Dorsolateral prefrontal cortex (tissue), 120 donors: ENCODE measurements at regions of chr10 and their contacts with region 1.

Region 1: GRCh38 chr10:71981015-71981875 is 17.1 kb downstream of the CHST3 start:
- DNase-seq: peak in 9 of 10 donors; percentile 75 to 94 (median 92)
- H3K4me3 ChIP-seq: peak overlapping the region in 23 of 59 donors; percentile 0 to 40 (median 14)
- H3K27ac ChIP-seq: peak overlapping the region; percentile 83 to 100 (median 96)
- H3K27me3 ChIP-seq: no peaks in the 10 kb centered on the region
- CTCF ChIP-seq: peak in 5 of 56 donors; percentile 3 to 28 (median 11)

Region 2: DNA sequence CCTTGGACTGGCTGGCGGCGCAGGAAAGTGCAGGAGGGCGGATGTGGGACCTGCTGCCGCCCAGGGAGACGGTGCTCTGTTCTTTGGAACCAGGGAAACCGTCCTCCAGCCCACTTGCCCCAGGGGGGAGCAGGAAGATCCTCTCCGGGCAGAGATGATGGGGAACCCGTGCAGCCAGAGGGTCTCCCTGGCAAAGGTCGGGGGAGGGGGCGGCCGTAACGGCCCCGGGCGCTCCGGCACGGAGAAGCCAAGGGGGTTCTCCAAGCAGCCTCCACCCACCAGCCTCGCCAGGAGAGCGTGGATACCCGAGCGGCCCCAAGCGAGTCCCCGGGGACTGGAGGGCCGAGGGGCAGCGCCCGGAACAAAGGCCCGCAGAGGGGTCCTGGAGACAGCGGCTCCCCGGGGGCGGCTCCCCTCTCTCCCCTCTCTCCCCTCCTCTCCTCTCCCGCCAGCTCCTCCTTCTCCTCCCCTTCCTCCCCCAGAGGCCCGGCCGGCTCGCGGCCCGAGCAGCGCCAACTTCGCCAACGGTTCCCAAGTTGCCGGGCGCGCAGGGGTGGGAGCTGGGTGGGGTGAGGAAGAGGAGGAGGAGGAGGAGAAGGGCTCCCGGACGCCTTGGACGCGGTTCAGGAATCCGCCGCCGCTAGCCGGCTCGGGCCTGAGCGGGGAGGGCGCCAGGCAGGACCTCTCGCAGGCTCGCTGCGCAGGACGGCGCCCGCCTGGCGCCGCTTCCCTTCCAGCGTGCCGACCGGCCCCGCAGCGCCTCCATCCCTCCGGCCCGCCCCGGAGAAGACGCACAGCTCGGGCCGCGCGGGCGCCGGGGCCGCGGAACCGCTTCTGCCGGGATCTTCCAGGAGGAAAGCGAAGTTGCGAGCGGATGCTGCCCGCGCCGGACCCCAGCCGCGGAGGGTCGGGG is 17.2 kb before region 1 on chr10 and contains the start of gene CHST3:
- intact Hi-C with region 1: loop called in 1 of 2 experiments (anchors 1 kb)
- DNase-seq: peak in 5 of 10 donors; percentile 36 to 77 (median 73)
- H3K4me3 ChIP-seq: peak within 1 kb of the TSS; percentile 49 to 92 (median 78)
- H3K27ac ChIP-seq: peak within 1 kb of the TSS; percentile 72 to 100 (median 97)
- H3K27me3 ChIP-seq: peaks cover 0 to 12% (median 0%) of the 10 kb centered on the region in 45 donors
- CTCF ChIP-seq: peak in 10 of 56 donors; percentile 4 to 29 (median 14)
- total RNA-seq, gene CHST3: 7.0 to 62.9 (median 19.6) TPM

Region 3: DNA sequence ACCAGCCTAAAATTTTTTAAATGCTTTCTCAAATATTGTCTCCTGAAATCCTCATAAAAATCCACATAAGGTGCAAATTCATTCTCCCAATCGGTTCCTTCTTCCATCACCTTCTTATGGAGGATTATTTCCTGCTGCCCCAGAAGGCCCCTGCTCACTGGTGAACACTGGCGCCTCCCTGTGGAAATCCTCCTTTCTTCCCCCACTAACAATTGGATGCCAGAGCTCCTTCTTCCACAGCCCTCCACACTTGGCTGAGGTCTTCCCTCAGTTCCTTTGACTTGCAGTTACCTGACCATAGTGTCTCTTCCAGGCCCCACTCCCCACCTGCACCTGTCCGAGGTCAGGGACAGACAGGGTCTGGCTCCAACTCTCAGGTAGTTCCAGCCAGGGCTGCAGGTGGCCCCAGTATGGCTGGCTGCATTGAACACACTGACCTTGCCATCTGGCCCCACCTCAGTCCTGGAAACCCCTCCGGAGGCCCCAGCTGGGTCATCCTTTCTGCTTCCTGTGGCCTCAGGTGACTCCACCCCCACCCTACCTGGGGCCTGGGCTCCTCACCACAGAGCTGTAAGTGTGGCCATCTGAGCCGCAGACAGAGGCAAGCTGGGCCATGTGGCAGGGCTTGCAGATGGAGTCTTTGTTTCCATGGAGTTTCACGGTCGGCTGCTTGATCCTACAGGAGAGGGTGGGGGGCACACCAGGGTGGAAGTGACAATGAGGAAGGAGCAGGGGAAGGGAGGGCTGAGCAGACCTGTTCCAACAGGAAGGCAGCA is 88.7 kb after region 1 on chr10:
- intact Hi-C with region 1: no loop called
- DNase-seq: no peak
- H3K4me3 ChIP-seq: no peak overlapping the region
- H3K27ac ChIP-seq: peak overlapping the region in 7 of 59 donors; percentile 5 to 60 (median 27)
- H3K27me3 ChIP-seq: no peaks in the 10 kb centered on the region
- CTCF ChIP-seq: no peak